ENCODE measurements at regions of chr1 and their contacts with region 1.

Region 1: GRCh38 chr1:223695941-223696340 is 16.4 kb upstream of the CAPN2 start:
- DNase-seq: no peak
- ATAC-seq: no peak
- H3K4me3 ChIP-seq: no peak overlapping the region
- H3K27ac ChIP-seq: no peak overlapping the region
- H3K4me1 ChIP-seq: peaks cover 11 to 32% of the 10 kb centered on the region in 2 experiments
- H3K27me3 ChIP-seq: no peaks in the 10 kb centered on the region
- CTCF ChIP-seq: no peak
- POLR2A ChIP-seq: no peak
- RAD21 ChIP-seq: no peak

Region 2: GRCh38 chr1:222987674-222988076 is 708.3 kb before region 1 on chr1:
- CTCF ChIA-PET with region 1: no interaction called
- POLR2A ChIA-PET with region 1: no interaction called
- RAD21 ChIA-PET with region 1: no interaction called
- intact Hi-C with region 1: no loop called
- DNase-seq: no peak
- ATAC-seq: no peak
- H3K4me3 ChIP-seq: no peak overlapping the region
- H3K27ac ChIP-seq: no peak overlapping the region
- H3K4me1 ChIP-seq: no peaks in the 10 kb centered on the region
- H3K27me3 ChIP-seq: no peaks in the 10 kb centered on the region
- CTCF ChIP-seq: 0 out of 6 replicates have a peak, but pooled peaks of 1 of the 3 experiments have one; percentile 9
- POLR2A ChIP-seq: no peak
- RAD21 ChIP-seq: peak; percentile 27; the same call in 1 of the 2 replicates

Region 3: DNA sequence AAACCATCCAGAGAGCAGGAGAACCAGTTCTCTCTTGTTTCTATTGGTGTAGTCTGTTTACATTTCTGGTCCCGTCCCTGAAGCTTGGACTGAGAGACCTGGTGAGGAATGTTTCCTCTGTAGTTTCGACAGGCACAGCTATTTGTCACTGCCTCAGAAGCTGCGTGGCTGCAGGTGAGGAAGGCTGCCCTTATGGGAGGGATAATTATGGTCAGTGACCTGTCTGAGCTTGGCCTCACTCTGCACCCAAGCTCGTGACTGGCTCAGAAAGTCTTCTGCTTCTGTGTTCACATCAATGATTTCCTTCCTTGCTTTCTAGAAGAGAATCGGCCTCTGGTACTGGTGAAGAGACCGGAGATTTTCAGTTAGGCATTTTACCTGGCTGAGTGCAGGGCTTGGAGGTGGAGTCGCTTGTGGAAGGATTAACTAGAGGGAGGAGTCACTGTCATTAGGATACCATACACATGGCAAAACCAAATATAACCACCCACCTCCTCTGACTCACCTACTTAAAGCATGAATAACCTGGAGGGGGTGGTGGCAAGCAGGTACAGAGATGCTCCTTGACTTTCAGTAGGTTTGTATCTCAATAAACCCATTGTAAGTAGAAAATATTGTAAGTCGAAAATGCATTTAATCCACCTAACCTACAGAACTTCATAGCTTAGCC is 758.6 kb after region 1 on chr1:
- CTCF ChIA-PET with region 1: no interaction called
- POLR2A ChIA-PET with region 1: no interaction called
- RAD21 ChIA-PET with region 1: no interaction called
- intact Hi-C with region 1: loop called (anchors 5 kb)
- DNase-seq: no peak
- ATAC-seq: peak; percentile 69
- H3K4me3 ChIP-seq: no peak overlapping the region
- H3K27ac ChIP-seq: no peak overlapping the region
- H3K4me1 ChIP-seq: peaks cover 7 to 26% of the 10 kb centered on the region in 2 experiments; a peak in 3 of 4 replicates
- H3K27me3 ChIP-seq: no peaks in the 10 kb centered on the region
- CTCF ChIP-seq: no peak
- POLR2A ChIP-seq: no peak
- RAD21 ChIP-seq: no peak

Measured in HCT116 (cell line).